ENCODE measurements at regions of chr3 and their contacts with region 1.

Region 1: DNA sequence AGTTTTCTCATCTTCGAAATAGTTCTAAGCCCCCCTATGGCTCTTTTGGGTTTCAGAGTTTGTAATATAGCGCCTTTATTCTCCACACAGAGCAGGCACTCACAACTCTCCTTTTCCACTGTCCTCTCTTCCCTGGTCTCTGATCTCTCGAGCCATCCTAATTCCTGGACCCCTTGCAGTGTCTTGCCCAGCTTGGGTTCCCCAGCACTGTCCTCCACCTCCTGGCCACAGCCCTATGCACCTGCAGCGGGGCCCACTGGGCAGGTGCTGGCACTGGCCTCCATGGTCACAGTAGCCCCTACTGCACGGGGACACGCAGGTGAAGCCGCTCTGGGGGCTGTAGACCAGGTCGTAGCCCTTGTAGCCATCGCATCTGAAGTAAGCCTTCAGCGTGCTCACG is 27.9 kb downstream of the MUC20 start:
- DNase-seq: peak in 1 of 9 experiments; percentile 25
- ATAC-seq: no peak
- H3K4me3 ChIP-seq: no peak overlapping the region
- H3K4me3 Mint-ChIP-seq: no peak overlapping the region
- H3K27ac ChIP-seq: no peak overlapping the region
- H3K27ac Mint-ChIP-seq: no peak overlapping the region
- H3K4me1 ChIP-seq: peaks cover 9% of the 10 kb centered on the region
- H3K4me1 Mint-ChIP-seq: peaks cover 9% of the 10 kb centered on the region
- H3K27me3 ChIP-seq: peaks cover 0 to 4% of the 10 kb centered on the region in 2 experiments
- H3K27me3 Mint-ChIP-seq: peaks cover 6% of the 10 kb centered on the region
- CTCF ChIP-seq: no peak

Region 2: DNA sequence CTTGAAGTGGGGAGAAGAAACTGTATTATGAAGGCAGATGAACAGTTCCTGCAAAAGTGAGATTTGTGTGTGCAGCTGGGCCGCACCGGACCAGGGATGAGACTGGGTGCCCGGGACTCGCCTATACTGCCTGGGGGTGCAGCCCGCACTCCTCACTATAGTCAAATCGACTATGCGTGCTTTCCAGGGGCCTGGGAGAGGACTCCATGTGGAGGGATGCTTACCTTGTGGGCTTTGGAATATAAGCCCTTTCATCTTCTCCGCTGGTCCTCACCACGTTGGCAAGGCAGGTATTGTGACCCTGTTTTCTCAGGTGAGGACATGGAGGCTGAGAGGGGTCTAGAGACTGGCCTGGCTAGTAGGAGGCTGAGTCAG is 132.0 kb before region 1 on chr3:
- CTCF ChIA-PET with region 1: no interaction called
- POLR2A ChIA-PET with region 1: no interaction called
- intact Hi-C with region 1: loop called in 1 of 2 experiments (anchors 10 kb)
- DNase-seq: no peak
- ATAC-seq: no peak
- H3K4me3 ChIP-seq: no peak overlapping the region
- H3K4me3 Mint-ChIP-seq: no peak overlapping the region
- H3K27ac ChIP-seq: no peak overlapping the region
- H3K27ac Mint-ChIP-seq: no peak overlapping the region
- H3K4me1 ChIP-seq: peaks cover 15% of the 10 kb centered on the region
- H3K4me1 Mint-ChIP-seq: peaks cover 20% of the 10 kb centered on the region
- H3K27me3 ChIP-seq: no peaks in the 10 kb centered on the region
- H3K27me3 Mint-ChIP-seq: no peaks in the 10 kb centered on the region
- CTCF ChIP-seq: no peak